ENCODE measurements at regions of chr1 and their contacts with region 1.

Region 1: GRCh38 chr1:86441581-86441980 is 17.6 kb downstream of the CLCA2 start:
- DNase-seq: no peak
- CTCF ChIP-seq: no peak

Region 2: DNA sequence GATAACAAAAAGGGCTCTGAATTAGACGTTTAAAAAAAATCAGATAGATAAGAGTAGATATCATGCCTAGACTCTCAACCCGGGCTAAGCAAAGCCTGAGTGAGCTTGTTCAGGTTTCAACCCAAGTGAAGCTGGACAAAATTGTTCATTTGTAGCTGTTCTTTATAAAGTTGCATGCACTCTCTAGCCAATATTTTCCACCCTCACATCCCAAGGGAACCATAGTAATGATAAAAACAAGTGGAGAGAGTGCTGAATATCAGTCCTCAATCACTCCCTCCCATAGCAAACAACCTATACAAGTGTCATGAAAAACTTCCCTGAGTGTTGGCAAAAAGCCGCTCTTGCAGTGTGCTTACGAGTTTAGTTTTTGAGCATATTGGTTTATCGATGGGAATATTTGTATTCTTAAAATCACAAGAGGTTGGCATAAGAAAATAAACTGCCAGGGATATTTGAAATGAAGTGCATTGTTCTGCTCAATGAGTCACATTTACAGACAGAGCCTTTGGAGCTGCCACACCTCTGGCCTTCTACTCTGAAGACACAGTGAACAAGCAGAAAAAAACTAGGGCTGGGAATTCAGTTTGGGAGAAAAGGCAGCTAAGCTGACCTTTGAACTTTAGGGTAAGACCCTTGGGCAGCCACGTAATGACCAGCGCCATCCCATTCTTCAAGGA is 19.8 kb before region 1 on chr1:
- CTCF ChIA-PET with region 1: interaction called, 25 read pairs
- POLR2A ChIA-PET with region 1: no interaction called
- DNase-seq: no peak
- CTCF ChIP-seq: no peak